ENCODE measurements at regions of chr1 and their contacts with region 1.

Region 1: GRCh38 chr1:168509875-168510791 is 33.7 kb downstream of the XCL2 start:
- DNase-seq: no peak
- ATAC-seq: peak; percentile 64
- H3K4me3 ChIP-seq: no peak overlapping the region
- H3K4me3 Mint-ChIP-seq: peak overlapping the region in 1 of 10 donors; percentile 57
- H3K27ac ChIP-seq: no peak overlapping the region
- H3K27ac Mint-ChIP-seq: peak overlapping the region in 3 of 9 donors; percentile 15 to 77 (median 26)
- H3K4me1 ChIP-seq: peaks cover 27 to 54% of the 10 kb centered on the region in 2 donors
- H3K4me1 Mint-ChIP-seq: peaks cover 42 to 78% (median 46%) of the 10 kb centered on the region in 7 donors
- H3K27me3 ChIP-seq: no peaks in the 10 kb centered on the region
- H3K27me3 Mint-ChIP-seq: no peaks in the 10 kb centered on the region

Region 2: DNA sequence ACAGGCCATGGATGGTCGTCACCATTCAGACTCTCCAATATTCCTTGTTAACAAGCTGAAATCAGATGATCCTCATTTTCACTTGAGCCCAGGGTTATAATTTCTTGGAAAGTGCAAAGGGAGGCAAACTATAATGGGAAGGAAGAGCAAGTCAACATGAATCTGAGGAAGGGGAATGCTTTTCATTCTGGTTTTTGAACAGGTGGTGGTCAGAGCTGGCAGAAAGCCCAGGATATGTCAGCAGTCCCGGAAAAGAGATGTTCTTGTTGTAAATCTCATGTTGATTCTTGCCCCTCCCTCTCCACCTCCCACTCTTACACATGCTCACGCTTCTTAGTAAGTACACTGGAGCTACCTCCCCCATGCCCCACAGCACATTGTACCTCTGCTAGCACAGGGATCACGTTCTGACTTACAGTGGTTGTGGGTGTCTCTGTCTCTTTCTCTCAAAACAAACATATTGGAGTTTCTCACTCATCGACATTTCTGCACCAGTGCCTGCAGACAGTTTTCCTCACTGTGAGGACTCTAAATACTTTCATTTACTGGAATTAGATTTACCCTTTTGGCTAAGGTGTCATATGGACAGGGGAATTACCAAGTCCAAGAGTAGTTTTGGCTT is 43.9 kb before region 1 on chr1:
- CTCF ChIA-PET with region 1: no interaction called
- POLR2A ChIA-PET with region 1: interaction called, 5 read pairs
- intact Hi-C with region 1: loop called in 1 of 2 experiments (anchors 5 kb)
- DNase-seq: peak in 4 of 9 donors; percentile 29 to 39 (median 32)
- ATAC-seq: peak; percentile 54
- H3K4me3 ChIP-seq: no peak overlapping the region
- H3K4me3 Mint-ChIP-seq: peak overlapping the region; percentile 44 to 72 (median 56)
- H3K27ac ChIP-seq: no peak overlapping the region
- H3K27ac Mint-ChIP-seq: peak overlapping the region; percentile 66 to 89 (median 80)
- H3K4me1 ChIP-seq: peaks cover 40 to 51% of the 10 kb centered on the region in 2 donors
- H3K4me1 Mint-ChIP-seq: peaks cover 47 to 66% (median 60%) of the 10 kb centered on the region in 7 donors
- H3K27me3 ChIP-seq: no peaks in the 10 kb centered on the region
- H3K27me3 Mint-ChIP-seq: no peaks in the 10 kb centered on the region

Region 3: DNA sequence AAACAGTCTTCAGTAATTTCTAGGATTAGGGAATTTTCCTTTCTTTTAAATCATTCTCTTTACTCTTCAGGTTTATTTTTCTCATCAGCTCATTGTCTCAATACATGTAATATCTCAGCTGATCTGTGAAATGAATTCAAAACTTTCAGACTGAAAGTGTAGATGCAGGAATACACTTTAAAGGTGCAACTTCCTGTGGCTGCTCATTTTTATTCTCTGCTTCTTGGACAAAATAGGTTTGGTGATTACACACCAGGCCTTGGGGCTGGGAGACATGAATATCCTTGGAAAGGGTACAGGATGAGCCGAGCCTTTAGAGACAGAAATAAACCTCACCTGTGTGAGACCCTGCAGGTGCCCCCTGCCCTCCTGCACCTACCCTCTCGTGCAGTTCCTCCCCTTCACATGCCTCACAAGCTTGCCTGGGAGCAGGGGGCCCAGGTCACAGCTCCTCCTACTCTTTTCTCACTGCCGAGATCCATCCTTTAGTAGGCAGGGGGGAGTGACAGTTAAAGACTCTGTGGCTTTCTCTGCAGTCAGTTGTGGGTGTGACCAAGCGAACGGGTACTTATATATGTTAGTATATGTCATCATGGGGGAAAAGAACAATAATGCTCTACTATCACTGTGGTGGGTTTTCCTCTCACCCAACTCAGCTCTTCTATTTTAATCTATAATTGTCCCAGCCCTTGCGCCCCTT is 10.1 kb after region 1 on chr1:
- CTCF ChIA-PET with region 1: interaction called, 3 read pairs
- POLR2A ChIA-PET with region 1: interaction called, 3 read pairs
- intact Hi-C with region 1: loop called in 1 of 2 experiments (anchors 1 kb)
- DNase-seq: peak in 4 of 9 donors; percentile 7 to 17 (median 11)
- ATAC-seq: peak; percentile 87
- H3K4me3 ChIP-seq: peak overlapping the region; percentile 21
- H3K4me3 Mint-ChIP-seq: peak overlapping the region; percentile 54 to 93 (median 68)
- H3K27ac ChIP-seq: peak overlapping the region; percentile 64
- H3K27ac Mint-ChIP-seq: peak overlapping the region; percentile 83 to 94 (median 89)
- H3K4me1 ChIP-seq: peaks cover 42 to 53% of the 10 kb centered on the region in 2 donors
- H3K4me1 Mint-ChIP-seq: peaks cover 45 to 64% (median 57%) of the 10 kb centered on the region in 7 donors
- H3K27me3 ChIP-seq: no peaks in the 10 kb centered on the region
- H3K27me3 Mint-ChIP-seq: peaks cover 0 to 2% (median 0%) of the 10 kb centered on the region in 5 donors

Region 4: DNA sequence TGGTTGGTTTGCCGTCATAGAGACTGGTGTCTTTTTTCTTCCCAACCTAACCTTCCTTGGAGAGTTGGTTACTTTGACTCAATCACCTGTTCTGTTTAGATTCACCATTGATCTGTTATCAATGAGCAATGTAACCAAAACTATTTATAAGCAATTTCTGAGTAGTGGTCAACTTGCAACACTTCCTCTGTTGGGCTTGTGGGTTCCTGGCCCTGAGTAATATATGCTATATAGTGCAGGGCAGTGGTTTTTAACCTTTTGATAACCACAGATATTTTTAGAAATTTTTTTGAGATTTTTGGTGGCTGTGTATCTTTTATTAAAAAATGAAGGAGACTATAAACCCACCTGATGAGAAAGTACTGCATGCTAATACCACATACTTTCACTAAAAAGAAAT is 56.9 kb after region 1 on chr1:
- CTCF ChIA-PET with region 1: no interaction called
- POLR2A ChIA-PET with region 1: interaction called, 3 read pairs
- intact Hi-C with region 1: loop called in 1 of 2 experiments (anchors 10 kb)
- DNase-seq: no peak
- ATAC-seq: no peak
- H3K4me3 ChIP-seq: no peak overlapping the region
- H3K4me3 Mint-ChIP-seq: no peak overlapping the region
- H3K27ac ChIP-seq: no peak overlapping the region
- H3K27ac Mint-ChIP-seq: no peak overlapping the region
- H3K4me1 ChIP-seq: no peaks in the 10 kb centered on the region
- H3K4me1 Mint-ChIP-seq: peaks cover 0 to 7% (median 0%) of the 10 kb centered on the region in 7 donors
- H3K27me3 ChIP-seq: no peaks in the 10 kb centered on the region
- H3K27me3 Mint-ChIP-seq: peaks cover 0 to 46% (median 0%) of the 10 kb centered on the region in 5 donors

Measured in naive thymus-derived CD4-positive, alpha-beta T cell (primary cell).